Activated T-helper 2 cell treated with anti-CD3 and anti-CD28 coated beads, Interferon-gamma antibody, Interleukin-2, Interleukin-4, amounts not matched to agents 10 μg/mL and 5 μg/mL and 100 μg/mL, durations not matched to agents 14 hours and 24 hours and 36 hours (primary cell): ENCODE measurements at regions of chr5 and their contacts with region 1.

Region 1: GRCh38 chr5:168486136-168486879 is at the start of gene RARS1:
- DNase-seq: peak; percentile 84
- H3K4me3 Mint-ChIP-seq: peak within 1 kb of the TSS; percentile 99
- H3K27ac Mint-ChIP-seq: peak within 1 kb of the TSS; percentile 89
- H3K4me1 Mint-ChIP-seq: peaks cover 26% of the 10 kb centered on the region
- H3K27me3 Mint-ChIP-seq: peaks cover 6% of the 10 kb centered on the region
- total RNA-seq, gene RARS1: 129 and 131 TPM in 2 replicates

Region 2: DNA sequence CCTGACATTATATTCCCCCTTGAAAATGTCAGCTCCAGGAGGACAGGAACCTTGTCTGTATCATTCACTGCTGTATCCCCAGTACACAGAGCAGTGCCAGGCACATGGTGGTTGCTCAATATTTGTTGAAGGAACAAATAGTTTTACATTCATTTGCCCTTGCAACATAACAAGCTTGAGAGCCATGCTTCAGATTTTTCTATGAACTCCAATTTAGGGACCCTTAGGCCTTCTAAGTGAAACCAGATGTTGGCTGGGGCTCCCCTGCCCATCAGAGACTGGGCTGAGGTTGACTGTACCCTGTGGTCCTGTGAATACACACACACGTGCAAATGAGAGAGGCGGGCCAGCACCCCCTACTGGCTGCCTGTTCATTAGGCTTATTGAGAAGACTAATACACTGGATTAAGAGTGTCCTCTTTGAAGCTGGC is 409.7 kb before region 1 on chr5:
- intact Hi-C with region 1: no loop called
- DNase-seq: no peak
- H3K4me3 Mint-ChIP-seq: no peak overlapping the region
- H3K27ac Mint-ChIP-seq: no peak overlapping the region
- H3K4me1 Mint-ChIP-seq: peaks cover 9% of the 10 kb centered on the region
- H3K27me3 Mint-ChIP-seq: peaks cover 4% of the 10 kb centered on the region

Region 3: DNA sequence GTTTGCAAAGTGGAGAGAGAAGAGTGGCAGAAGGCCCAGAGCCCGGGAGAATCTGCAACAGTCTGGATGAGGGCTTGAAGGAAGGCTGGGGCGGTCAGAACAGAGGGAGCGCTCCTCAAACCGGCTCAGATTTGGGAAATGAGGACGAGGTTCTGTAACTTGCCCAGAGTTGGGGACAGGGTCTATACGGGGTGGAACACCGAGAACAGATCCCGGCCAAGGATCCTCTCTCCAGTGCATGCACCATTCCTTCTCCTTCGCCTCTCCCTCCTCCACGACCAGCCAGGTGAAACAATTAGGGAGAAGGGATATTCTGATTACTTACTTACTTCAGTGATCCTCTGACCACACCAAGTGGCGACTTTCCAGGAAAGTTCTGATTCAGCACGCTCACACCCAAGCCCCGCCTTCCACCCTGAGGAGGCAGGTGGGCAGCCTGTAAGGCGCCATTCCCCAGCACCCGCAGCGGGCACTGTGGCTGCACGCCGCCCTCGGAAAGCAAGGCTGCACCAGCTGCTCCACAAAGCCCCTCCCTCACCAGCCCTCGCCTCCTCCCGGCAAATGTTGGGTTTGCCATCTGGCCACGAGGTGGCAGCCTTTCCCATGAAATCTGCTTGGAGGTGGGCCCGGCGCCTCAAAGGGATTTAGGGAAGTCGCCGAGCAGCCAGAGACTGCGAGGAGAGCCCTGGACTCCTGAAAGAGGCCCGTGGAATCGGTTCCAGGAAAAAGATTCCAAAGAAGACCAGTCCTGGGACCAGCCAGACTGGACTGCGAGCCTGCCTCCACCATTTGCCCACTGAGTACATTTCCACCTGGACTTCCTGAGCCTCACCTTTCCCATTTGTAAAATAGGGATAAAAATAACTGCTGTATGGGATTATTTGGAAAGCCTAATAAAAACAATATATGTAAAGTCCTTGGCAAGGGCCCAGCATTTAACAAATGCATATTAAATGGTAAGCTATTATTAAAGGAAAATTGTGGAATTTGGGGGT is 217.1 kb before region 1 on chr5:
- intact Hi-C with region 1: loop called (anchors 5 kb)
- DNase-seq: peak; percentile 51
- H3K4me3 Mint-ChIP-seq: no peak overlapping the region
- H3K27ac Mint-ChIP-seq: no peak overlapping the region
- H3K4me1 Mint-ChIP-seq: peaks cover 3% of the 10 kb centered on the region
- H3K27me3 Mint-ChIP-seq: peaks cover 20% of the 10 kb centered on the region

Region 4: DNA sequence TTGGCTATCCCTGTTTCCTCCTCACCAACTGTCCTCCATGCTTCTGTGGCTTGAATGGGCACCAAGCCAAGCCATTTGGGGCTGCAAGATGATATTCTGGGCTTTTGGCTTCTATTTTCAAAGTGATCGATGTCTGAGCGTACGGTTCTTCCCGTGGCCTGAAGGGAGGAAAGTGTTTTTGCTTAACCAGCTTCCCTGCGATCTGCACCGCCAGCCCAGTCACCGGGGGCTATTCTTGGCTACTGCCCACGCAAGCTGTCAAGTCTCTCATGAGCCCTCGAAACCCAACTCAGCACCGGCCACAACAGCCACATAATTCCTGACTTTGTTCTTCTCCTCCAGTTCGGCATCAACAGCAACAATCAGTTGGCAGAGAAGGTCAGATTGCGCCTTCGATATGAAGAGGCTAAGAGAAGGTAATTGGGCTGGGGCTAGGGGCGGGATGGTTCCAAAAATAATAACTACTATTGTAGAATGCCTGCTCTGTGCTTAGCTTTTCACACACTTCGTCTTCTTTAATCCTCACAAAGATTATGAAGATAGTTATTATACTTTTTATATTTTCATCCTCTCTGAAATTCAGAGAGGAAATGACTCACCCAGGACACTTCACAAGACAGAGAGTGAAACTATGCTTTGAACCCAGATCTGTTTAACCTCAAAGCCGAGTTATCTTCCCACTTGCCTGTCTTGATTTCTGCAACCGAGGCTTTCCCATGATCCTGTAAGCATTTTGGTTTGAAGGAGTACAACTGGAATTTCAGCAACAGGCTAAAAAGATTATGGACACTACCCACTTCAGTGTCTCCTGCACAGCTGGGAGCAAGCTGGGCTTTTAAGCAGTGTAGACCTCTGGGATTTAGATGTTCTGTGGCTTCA is 76.5 kb before region 1 on chr5:
- intact Hi-C with region 1: loop called (anchors 5 kb)
- DNase-seq: peak; percentile 10
- H3K4me3 Mint-ChIP-seq: peak overlapping the region; percentile 14
- H3K27ac Mint-ChIP-seq: no peak overlapping the region
- H3K4me1 Mint-ChIP-seq: peaks cover 22% of the 10 kb centered on the region
- H3K27me3 Mint-ChIP-seq: peaks cover 58% of the 10 kb centered on the region

Region 5: DNA sequence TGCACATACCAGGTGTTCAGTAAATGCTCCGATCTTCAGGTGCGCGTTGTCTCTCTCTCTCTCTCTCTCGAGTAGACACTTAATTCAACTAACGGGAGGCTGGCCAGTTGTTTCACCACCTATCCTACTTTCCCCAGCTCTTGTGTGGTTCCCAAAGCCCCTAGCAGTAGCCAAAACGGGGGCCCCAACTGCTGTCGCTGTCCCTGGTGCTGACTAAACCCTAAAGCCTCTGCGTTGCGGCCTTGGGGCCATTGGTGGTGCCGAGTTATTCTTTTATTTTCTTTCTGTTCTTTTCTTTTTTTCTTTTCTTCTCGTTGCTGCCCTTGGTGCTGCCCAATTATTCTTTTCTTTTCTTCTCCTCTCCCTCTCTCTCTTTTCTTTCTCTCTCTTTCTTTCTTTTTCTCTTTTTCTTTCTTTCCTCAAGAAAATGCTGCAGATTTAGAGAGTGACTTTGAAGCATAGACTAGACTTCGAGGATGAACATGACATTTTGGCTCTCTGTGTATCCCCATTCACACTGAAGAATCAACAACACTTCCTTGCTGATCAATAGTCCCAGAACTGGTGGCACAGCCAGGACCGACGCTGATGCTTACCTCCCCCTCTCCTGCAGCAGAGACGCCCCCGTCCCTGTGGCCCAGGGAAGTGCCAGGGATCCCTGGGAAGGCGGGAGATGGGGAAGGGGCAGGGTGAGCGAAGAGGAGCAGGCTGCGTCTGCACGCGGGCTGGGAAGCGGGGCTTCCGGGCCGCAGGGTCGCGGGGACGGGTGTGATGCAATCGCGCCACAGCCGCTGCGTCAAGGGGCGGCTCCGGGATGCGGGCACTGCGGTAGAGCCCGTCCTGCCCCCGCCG is 42.4 kb after region 1 on chr5 and contains the start of gene FBLL1:
- intact Hi-C with region 1: loop called (anchors 1 kb)
- DNase-seq: no peak
- H3K4me3 Mint-ChIP-seq: peak within 1 kb of the TSS; percentile 62
- H3K27ac Mint-ChIP-seq: no peak within 1 kb of the TSS
- H3K4me1 Mint-ChIP-seq: peaks cover 8% of the 10 kb centered on the region
- H3K27me3 Mint-ChIP-seq: peaks cover 38% of the 10 kb centered on the region
- total RNA-seq, gene FBLL1: not detected in 2 replicates

Region 6: DNA sequence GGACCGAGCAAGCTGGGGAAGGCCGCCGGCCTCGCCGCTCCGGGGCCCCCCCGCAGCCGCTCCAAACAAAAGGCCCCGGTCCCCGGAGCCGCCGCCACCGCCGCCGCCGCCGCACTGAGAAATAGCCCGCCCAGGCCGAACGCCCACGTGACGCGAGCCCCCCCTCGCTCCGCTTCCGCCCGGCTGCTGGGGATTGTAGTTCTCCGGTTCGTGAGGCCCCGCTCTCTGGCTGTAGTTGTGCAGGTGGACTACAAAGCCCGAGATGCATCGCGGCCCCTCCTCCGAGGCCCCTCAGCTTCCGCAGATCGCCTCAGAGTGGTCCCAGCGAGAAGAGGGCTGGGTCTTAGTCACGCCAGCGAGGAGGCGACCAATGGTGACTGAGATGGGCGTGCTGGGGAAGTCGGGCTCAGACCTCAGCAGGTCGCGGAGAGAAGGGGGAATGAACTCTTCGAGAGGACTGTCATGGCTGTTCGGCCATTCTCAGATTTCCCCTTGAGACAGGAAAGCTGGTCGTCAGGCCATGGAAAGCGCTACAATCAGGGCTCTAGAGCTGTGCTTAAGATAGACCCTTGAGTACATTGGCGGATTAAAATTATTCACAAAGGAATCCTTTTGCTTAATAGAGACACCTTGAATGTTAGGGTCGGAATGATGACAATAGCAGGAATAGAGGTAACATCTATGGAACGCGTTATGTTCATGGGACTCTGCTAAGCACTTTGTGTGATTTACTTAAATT is 93.3 kb after region 1 on chr5:
- intact Hi-C with region 1: loop called (anchors 1 kb)
- DNase-seq: peak; percentile 97
- H3K4me3 Mint-ChIP-seq: peak overlapping the region; percentile 77
- H3K27ac Mint-ChIP-seq: peak overlapping the region; percentile 94
- H3K4me1 Mint-ChIP-seq: peaks cover 32% of the 10 kb centered on the region
- H3K27me3 Mint-ChIP-seq: no peaks in the 10 kb centered on the region

Region 7: DNA sequence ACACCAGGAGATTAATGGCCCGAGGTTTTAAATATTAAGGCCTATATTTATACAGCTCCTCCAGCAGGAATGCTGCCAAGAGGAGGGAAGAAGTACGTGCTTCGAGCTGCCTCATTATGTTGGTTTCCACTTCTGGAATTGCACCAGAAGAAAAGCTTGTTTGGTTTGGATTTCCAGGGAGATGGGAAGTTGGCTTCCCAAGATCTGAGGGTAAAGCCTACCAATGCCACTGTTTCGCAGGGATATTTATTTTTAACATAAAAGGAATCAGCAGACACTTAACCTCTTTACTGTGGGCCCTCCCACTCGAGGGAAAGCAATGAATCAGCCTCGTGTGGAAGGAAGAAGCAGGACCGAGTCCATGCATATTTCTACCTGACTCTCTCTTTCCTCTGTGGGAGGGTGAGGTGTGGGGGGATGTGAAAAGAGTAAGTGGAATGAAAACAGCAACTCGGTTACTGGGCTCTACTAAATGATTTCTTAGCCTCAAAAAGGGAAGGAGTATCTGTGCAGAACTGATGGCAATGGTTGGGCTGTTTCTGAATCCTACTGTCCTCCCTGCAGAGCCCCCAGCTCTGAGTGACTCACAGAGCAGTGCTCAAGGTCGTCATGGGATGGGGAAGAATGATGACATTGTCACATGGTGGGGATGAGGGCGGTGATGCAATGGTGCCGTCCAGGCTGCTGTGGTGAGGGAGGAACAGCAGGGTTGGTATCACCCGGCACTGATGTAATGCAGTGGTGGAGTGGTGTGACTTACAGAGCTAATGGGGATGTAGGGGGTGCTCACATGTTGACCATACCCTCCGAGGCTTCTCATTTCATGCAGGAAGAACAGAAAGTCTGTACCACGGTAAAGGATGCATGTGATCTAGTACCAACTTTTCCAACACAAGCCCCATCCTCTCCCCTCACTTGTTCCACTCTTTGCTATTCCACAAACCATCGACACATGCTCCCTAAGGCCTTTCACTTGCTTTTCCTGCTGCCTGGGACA is 307.8 kb after region 1 on chr5:
- intact Hi-C with region 1: loop called (anchors 10 kb)
- DNase-seq: no peak
- H3K4me3 Mint-ChIP-seq: no peak overlapping the region
- H3K27ac Mint-ChIP-seq: peak overlapping the region; percentile 95
- H3K4me1 Mint-ChIP-seq: peaks cover 56% of the 10 kb centered on the region
- H3K27me3 Mint-ChIP-seq: no peaks in the 10 kb centered on the region